Activated naive CD4-positive, alpha-beta T cell treated with anti-CD3 and anti-CD28 coated beads for 36 hours (primary cell): ENCODE measurements at regions of chr3 and their contacts with region 1.

Region 1: GRCh38 chr3:124905849-124906248 is 18.7 kb upstream of the ITGB5 start:
- DNase-seq: no peak
- H3K4me3 Mint-ChIP-seq: no peak overlapping the region
- H3K27ac Mint-ChIP-seq: peak overlapping the region; percentile 6
- H3K4me1 Mint-ChIP-seq: peaks cover 2% of the 10 kb centered on the region
- H3K27me3 Mint-ChIP-seq: peaks cover 5% of the 10 kb centered on the region

Region 2: DNA sequence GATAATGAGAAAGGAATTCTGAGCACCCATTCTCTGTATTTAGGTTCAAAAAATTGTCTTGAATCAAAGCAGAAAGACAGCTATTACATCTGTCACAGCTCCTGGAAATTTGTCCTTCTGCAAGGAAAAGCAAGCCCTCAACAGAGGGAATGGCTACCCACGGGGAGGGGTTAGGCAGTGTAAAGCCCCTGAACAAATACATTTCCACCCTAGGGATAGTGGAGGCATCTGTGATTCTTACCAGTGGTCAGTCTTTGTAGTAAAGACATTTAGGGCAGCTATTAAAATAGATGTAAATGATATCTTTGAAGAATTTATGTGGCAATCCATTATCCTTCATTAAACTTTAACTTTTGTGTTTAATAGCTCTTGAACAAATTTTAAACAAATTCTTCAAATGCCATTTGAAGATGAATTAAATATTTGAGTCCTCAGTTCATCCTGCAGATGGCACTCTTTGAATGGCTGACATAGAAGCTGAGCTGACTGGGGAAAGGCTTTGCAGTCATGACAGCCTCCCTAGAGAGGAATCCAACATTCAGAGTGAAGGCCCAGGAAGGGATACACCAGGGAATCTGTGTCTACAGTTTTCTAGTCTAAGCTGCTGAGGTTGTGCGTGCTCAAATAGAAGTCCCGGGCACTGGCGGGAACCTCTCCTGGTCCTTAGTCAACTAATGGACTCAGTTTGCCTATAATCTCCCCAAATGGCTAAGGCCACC is 554.3 kb before region 1 on chr3:
- CTCF ChIA-PET with region 1: no interaction called
- intact Hi-C with region 1: no loop called
- DNase-seq: peak; percentile 5
- H3K4me3 Mint-ChIP-seq: no peak overlapping the region
- H3K27ac Mint-ChIP-seq: no peak overlapping the region
- H3K4me1 Mint-ChIP-seq: no peaks in the 10 kb centered on the region
- H3K27me3 Mint-ChIP-seq: peaks cover 3% of the 10 kb centered on the region

Region 3: DNA sequence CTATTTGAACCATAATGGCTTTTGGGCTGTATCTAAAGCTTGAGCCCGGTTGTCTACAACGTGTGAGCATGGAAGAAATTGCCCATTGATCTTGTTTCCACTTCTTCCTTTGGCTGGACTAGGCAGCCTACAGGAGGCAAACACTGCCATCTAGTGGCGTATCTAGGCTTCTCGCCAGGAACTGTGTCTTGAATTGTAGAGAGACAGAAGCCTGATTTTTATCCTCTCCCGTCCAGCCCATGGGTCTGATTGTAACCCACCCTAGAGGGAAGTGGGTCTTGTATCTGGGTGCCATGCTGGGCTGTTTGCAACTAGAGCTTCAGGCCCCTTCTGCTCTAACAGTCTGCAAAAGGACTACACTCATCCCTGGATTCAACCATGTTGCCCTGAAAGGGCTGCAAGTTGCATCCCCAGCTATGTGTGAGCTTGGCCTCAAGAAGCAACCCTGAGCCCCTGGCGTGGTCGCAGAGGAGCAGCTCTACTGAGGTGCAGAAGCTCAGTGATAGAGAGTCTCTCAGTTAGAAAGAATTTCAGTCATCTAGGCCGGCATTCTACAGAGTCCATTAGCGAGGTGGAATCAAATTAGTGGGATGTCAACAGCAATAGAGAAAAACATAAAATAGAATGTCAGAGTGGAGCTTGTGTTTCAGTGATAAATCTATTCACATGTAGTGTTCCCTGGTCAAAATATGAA is 345.8 kb before region 1 on chr3:
- CTCF ChIA-PET with region 1: interaction called, 3 read pairs
- intact Hi-C with region 1: loop called (anchors 2 kb)
- DNase-seq: peak; percentile 82
- H3K4me3 Mint-ChIP-seq: no peak overlapping the region
- H3K27ac Mint-ChIP-seq: no peak overlapping the region
- H3K4me1 Mint-ChIP-seq: no peaks in the 10 kb centered on the region
- H3K27me3 Mint-ChIP-seq: peaks cover 17% of the 10 kb centered on the region

Region 4: DNA sequence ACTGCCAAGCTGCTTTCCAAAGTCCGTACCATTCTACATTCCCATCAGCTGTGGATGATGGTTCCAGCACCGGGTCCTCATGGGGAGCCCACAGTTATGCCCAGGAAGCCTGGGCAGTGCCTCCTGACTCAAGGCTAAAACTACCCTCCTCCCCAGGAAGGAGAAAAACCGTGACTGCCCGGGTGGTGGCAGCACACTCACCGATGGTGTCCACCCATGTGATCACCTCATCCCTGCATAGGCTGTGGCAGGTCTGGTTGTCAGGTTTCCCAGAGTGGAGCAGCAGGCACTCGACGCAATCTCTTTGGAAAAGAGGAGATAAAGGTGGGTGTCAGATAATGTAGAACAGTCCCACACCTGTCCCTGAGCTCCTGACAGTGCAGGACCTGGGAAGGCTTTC is 137.0 kb before region 1 on chr3:
- CTCF ChIA-PET with region 1: interaction called, 156 read pairs
- intact Hi-C with region 1: no loop called
- DNase-seq: peak; percentile 31
- H3K4me3 Mint-ChIP-seq: no peak overlapping the region
- H3K27ac Mint-ChIP-seq: no peak overlapping the region
- H3K4me1 Mint-ChIP-seq: no peaks in the 10 kb centered on the region
- H3K27me3 Mint-ChIP-seq: peaks cover 3% of the 10 kb centered on the region

Region 5: DNA sequence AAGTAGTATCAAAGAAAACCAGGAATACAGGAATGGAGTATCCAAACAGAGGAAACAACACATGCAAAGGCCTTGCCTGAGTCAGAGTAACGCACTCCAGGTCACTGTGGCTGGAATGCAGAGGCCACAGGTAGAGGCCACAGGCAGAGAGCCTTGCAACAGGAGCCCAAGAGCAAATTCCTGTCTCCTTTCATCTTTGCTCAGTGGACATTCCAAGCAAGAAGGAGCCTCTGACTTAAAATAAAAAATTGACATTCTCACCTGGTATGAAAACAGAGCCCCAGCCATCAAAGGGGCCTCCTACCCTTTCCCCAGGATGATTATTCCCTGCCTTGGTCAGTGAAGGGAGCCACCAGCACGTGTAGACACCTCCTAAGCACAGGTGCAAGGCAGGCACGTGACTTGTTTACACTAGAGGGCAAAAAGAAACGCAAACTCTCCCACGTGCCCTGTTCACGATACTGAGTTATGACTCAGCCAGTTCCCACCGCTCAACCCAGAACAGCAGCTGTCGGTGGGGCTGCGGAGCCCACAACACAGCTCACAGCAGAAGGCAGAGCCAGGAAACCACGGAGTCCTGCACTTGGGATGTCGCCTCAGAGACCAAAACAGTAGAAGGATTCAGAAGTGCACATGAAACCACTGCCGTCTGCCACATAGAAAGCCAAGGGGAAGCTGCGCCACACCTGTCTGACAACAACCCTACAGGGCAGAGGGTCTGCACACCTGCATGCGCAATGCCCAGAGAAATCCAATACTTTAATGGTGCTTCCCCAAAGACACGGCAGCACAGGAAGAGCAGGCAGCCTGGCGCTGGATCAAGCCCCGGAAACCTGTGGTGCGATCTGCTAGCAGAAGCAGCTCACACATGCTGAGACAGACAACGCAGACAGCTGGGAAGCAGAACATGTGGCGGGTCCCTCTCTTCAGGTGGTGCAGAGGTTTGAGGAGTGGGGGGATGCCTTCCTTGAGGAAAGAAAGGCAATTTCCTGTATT is 70.8 kb before region 1 on chr3:
- CTCF ChIA-PET with region 1: interaction called, 6 read pairs
- intact Hi-C with region 1: loop called (anchors 1 kb)
- DNase-seq: peak; percentile 83
- H3K4me3 Mint-ChIP-seq: peak overlapping the region; percentile 64
- H3K27ac Mint-ChIP-seq: peak overlapping the region; percentile 6
- H3K4me1 Mint-ChIP-seq: peaks cover 9% of the 10 kb centered on the region
- H3K27me3 Mint-ChIP-seq: peaks cover 7% of the 10 kb centered on the region

Region 6: DNA sequence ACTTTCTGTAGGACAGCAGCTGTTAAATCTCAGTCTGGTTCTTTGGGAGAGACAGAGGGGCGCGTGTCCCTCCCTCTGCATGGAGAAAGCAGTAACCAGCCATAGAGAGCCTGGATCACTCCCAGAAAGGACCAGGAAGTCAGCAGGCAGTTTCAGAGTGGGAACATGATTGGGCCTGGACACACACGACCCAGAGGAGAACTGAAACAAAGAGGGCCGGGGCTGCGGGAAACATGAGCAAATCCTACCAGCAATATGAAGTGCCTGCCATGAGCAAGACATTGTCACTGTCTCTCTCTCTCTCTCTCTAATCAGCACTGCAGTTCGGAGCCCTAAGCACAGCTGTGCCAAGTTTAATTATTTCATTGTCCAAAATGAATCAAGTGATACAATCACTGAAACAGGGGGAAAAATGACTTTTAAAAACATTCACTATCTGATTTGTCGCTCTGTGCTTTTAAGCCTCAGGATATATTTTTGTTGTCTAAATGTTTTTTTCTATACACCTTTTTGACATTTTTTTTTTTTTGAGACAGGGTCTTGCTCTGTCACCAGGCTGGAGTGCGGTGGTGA is 11.1 kb after region 1 on chr3:
- CTCF ChIA-PET with region 1: interaction called, 14 read pairs
- intact Hi-C with region 1: no loop called
- DNase-seq: no peak
- H3K4me3 Mint-ChIP-seq: no peak overlapping the region
- H3K27ac Mint-ChIP-seq: no peak overlapping the region
- H3K4me1 Mint-ChIP-seq: no peaks in the 10 kb centered on the region
- H3K27me3 Mint-ChIP-seq: no peaks in the 10 kb centered on the region

Region 7: DNA sequence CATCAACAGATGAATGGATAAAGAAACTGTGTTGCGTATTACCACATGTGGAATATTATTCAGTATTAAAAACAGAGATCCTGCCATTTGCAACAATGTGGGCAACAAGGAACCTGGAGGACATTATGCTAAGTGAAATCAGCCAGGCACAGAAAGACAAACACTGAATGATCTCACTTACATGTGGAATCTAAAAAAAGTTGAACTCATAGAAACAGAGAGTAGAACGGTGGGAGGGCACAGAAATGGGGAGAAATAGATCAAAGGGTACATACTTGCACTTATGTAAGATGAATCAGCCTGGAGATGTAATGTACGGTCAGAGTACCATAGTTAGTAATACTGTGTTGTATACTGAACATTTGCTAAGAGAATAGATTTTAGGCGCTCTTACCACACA is 58.5 kb after region 1 on chr3:
- CTCF ChIA-PET with region 1: no interaction called
- intact Hi-C with region 1: no loop called
- DNase-seq: peak; percentile 26
- H3K4me3 Mint-ChIP-seq: no peak overlapping the region
- H3K27ac Mint-ChIP-seq: no peak overlapping the region
- H3K4me1 Mint-ChIP-seq: peaks cover 5% of the 10 kb centered on the region
- H3K27me3 Mint-ChIP-seq: no peaks in the 10 kb centered on the region

Region 8: DNA sequence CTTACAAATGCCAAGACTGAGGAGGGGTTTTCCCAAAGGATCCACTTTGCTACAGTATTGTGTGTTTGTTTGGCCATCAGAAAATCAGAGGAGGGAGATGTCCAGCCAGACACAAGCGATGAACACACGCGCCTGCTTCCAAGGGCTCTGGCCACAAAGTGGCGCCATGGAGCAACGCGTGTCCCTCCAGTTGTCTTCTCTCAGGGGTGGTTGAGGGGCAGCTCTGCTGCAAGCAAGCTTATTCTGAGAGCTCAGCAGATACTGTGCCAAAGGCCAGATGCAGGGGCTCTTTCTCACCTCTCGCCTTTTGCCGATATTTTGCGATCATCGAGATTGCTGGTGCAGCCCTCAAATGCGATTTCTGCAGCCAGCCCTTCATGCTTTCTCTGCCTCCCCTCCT is 778.4 kb after region 1 on chr3:
- CTCF ChIA-PET with region 1: no interaction called
- intact Hi-C with region 1: no loop called
- DNase-seq: no peak
- H3K4me3 Mint-ChIP-seq: no peak overlapping the region
- H3K27ac Mint-ChIP-seq: no peak overlapping the region
- H3K4me1 Mint-ChIP-seq: no peaks in the 10 kb centered on the region
- H3K27me3 Mint-ChIP-seq: peaks cover 1% of the 10 kb centered on the region